Panc1 (cell line): ENCODE measurements at regions of chr19 and their contacts with region 1.

Region 1: DNA sequence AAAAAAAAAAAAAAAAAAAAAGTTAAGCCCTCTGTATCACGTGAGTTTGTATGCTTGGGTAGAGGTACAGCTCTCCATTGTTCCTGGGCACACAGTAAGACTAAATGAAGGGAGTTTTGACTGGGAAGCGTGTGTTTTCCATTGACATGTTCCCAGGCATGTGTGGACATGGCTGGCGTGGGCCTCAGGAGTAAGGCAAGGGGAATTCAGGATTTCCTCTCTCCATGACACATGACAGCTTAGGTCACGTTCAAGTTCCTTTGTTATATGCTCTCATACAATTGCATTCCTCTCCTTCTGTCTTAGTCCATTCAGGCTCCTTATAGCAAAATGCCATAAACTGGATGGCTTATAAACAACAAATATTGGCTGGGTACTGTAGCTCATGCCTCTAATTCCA is 17.1 kb upstream of the MAP3K10 start:
- DNase-seq: no peak
- ATAC-seq: no peak
- H3K4me3 ChIP-seq: no peak overlapping the region
- H3K27ac ChIP-seq: no peak overlapping the region
- H3K4me1 ChIP-seq: no peaks in the 10 kb centered on the region
- H3K27me3 ChIP-seq: 0 out of 2 replicates have a peak, but pooled peaks cover 2% of the 10 kb centered on the region
- CTCF ChIP-seq: no peak

Region 2: DNA sequence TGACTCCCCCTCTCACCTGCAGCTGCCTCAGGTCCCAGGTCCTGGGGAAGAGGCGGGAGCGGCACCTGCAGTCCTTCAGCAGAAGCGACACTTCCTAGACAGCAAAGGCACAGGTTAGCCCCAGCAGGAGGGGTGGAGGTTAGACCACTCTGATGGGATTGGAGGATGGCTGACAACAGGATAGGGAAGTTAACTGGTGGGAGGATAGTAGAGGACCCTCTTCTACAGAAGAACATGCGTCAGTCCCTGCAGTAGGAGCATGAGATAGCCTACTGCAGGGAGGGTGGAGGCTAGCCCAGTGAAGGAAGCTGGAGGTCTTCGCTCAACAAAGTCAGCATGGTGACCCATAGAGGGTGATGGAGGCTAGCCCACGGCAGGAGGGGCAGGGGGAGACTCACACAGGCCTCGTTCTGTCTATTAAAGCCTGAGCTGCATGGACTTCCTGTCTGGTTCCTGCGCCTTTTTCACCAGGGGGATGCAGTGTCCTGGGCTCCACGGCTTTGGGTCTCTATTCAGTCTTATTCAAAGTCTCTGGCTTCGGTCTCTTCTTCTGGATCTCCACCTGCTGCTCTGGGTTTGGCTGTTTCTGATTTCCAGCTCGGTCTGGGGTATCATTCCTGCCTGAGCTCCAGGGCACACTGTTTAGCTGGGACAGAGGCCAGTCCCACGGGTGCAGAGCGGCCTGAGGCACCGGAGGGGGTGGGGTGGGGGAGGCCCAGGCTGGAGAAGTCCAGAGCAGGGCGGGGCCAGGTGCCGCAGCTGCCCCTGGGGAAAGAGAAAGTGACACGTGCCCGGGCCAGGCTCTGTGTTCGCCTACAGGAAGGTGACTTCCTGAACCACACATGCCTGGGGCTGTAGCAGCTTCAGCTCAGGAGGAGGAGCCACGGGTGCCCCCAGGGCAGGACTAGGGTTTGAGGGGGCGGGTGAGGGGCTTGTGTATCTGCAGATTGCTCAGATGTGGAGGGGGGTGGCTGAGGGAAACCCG is 936.6 kb before region 1 on chr19:
- CTCF ChIA-PET with region 1: no interaction called
- POLR2A ChIA-PET with region 1: interaction called, 11 read pairs
- in situ Hi-C with region 1: no loop called
- intact Hi-C with region 1: no loop called
- DNase-seq: no peak
- ATAC-seq: peak; percentile 73
- H3K4me3 ChIP-seq: peak overlapping the region in 1 of 2 experiments; percentile 23; a peak in 2 of 4 replicates
- H3K27ac ChIP-seq: no peak overlapping the region
- H3K4me1 ChIP-seq: no peaks in the 10 kb centered on the region
- H3K27me3 ChIP-seq: no peaks in the 10 kb centered on the region
- CTCF ChIP-seq: no peak

Region 3: DNA sequence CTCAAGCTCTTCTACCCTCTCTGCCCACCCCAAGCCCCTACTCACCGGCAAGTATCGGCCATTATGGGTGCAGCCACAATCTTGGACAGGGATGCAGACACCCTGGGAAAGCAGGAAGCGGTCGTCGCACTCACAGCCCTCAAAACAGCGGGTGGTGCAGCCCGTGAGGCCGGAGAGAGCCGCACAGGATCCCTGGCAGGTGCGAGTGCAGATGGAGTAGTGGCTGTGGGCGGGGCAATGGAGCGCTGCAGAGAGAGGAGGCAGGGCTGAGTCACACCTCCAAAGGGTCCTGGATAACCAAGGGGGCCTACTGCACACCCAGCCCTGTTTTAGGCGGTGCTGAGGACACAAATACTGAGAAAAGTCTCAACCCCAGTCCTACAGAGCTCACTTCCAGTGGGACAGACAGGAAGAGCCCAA is 303.9 kb before region 1 on chr19:
- CTCF ChIA-PET with region 1: no interaction called
- POLR2A ChIA-PET with region 1: no interaction called
- in situ Hi-C with region 1: no loop called
- intact Hi-C with region 1: no loop called
- DNase-seq: no peak
- ATAC-seq: 0 out of 2 replicates have a peak, but pooled peaks have one; percentile 0
- H3K4me3 ChIP-seq: no peak overlapping the region
- H3K27ac ChIP-seq: no peak overlapping the region
- H3K4me1 ChIP-seq: no peaks in the 10 kb centered on the region
- H3K27me3 ChIP-seq: peaks cover 12% of the 10 kb centered on the region; the same call in 1 of the 2 replicates
- CTCF ChIP-seq: no peak

Region 4: GRCh38 chr19:40133491-40133890 is 40.6 kb before region 1 on chr19:
- CTCF ChIA-PET with region 1: interaction called, 8 read pairs
- POLR2A ChIA-PET with region 1: interaction called, 22 read pairs
- in situ Hi-C with region 1: no loop called
- intact Hi-C with region 1: no loop called
- DNase-seq: no peak
- ATAC-seq: peak; percentile 44
- H3K4me3 ChIP-seq: no peak overlapping the region
- H3K27ac ChIP-seq: no peak overlapping the region
- H3K4me1 ChIP-seq: no peaks in the 10 kb centered on the region
- H3K27me3 ChIP-seq: peaks cover 87% of the 10 kb centered on the region
- CTCF ChIP-seq: no peak

Region 5: GRCh38 chr19:40200341-40201099 is 26.4 kb after region 1 on chr19:
- CTCF ChIA-PET with region 1: interaction called, 14 read pairs
- POLR2A ChIA-PET with region 1: interaction called, 3 read pairs
- in situ Hi-C with region 1: no loop called
- intact Hi-C with region 1: no loop called
- DNase-seq: no peak
- ATAC-seq: peak; percentile 7; the same call in 1 of the 2 replicates
- H3K4me3 ChIP-seq: no peak overlapping the region
- H3K27ac ChIP-seq: no peak overlapping the region
- H3K4me1 ChIP-seq: no peaks in the 10 kb centered on the region
- H3K27me3 ChIP-seq: no peaks in the 10 kb centered on the region
- CTCF ChIP-seq: no peak

Region 6: GRCh38 chr19:40210921-40211320 is 36.8 kb after region 1 on chr19:
- CTCF ChIA-PET with region 1: interaction called, 10 read pairs
- POLR2A ChIA-PET with region 1: interaction called, 10 read pairs
- in situ Hi-C with region 1: no loop called
- intact Hi-C with region 1: no loop called
- DNase-seq: no peak
- ATAC-seq: 0 out of 2 replicates have a peak, but pooled peaks have one; percentile 2
- H3K4me3 ChIP-seq: no peak overlapping the region
- H3K27ac ChIP-seq: no peak overlapping the region
- H3K4me1 ChIP-seq: no peaks in the 10 kb centered on the region
- H3K27me3 ChIP-seq: no peaks in the 10 kb centered on the region
- CTCF ChIP-seq: no peak

Region 7: GRCh38 chr19:40216013-40216776 is 42.1 kb after region 1 on chr19:
- CTCF ChIA-PET with region 1: interaction called, 14 read pairs
- POLR2A ChIA-PET with region 1: interaction called, 6 read pairs
- in situ Hi-C with region 1: no loop called
- intact Hi-C with region 1: no loop called
- DNase-seq: no peak
- ATAC-seq: no peak
- H3K4me3 ChIP-seq: no peak overlapping the region
- H3K27ac ChIP-seq: no peak overlapping the region
- H3K4me1 ChIP-seq: peaks cover 27% of the 10 kb centered on the region
- H3K27me3 ChIP-seq: peaks cover 23% of the 10 kb centered on the region
- CTCF ChIP-seq: no peak

Region 8: GRCh38 chr19:40403262-40403984 is 229.3 kb after region 1 on chr19:
- CTCF ChIA-PET with region 1: no interaction called
- POLR2A ChIA-PET with region 1: no interaction called
- in situ Hi-C with region 1: no loop called
- intact Hi-C with region 1: no loop called
- DNase-seq: no peak
- ATAC-seq: peak; percentile 94
- H3K4me3 ChIP-seq: peak overlapping the region; percentile 55 to 61
- H3K27ac ChIP-seq: peak overlapping the region; percentile 52
- H3K4me1 ChIP-seq: no peaks in the 10 kb centered on the region
- H3K27me3 ChIP-seq: no peaks in the 10 kb centered on the region
- CTCF ChIP-seq: no peak